Ascending aorta (tissue), 2 donors: ENCODE measurements at regions of chrX and their contacts with region 1.

Region 1: DNA sequence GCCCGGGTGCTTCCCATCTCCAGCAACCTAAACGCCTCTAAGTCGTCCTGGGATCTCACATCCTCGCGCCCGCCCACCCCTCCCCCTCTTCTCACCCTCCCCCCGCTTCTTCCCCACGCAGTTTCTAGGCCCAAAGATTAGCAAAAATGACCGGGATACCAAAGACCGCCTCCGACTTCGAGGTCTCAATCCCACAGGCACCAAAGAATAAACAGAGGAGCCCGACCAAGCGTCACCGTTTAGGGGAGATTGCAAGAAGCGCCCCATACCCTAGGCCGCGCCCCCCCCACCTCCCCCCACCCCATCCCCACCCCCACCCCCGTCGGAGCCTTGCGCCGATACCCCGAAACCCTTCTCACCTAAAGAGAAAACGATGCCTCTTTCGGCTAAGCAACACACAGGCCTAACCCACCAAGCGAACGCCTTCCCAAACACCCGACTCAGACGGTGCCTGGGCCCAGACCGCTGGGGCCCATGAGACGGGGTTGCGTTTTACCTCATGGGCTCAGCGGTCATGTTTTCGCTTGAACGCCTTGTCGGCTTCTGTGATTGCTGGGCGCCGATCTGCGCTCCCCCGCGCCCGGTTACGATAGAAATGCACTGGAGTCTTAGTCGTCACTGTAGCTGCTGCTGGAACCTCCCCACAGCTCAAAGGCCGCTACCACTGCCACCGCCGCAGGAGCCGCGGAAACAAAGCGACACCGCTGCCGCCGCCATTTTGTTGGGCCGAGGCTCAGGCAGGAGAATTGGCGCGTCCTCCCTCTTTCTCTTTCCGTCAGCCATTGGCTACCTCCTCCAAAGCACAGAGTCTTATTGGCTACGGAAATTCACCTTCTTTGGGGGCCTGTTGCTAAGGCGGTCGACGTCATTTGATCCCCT is at the start of gene ATRX:
- DNase-seq: peak; percentile 15 to 84
- H3K4me3 ChIP-seq: peak within 1 kb of the TSS; percentile 60 to 82
- H3K27ac ChIP-seq: peak within 1 kb of the TSS; percentile 90 to 93
- H3K4me1 ChIP-seq: no peaks in the 10 kb centered on the region
- H3K27me3 ChIP-seq: no peaks in the 10 kb centered on the region
- CTCF ChIP-seq: no peak
- total RNA-seq, gene ATRX: 117 TPM

Region 2: GRCh38 chrX:77675986-77676385 is 109.7 kb before region 1 on chrX:
- intact Hi-C with region 1: loop called (anchors 10 kb)
- DNase-seq: no peak
- H3K4me3 ChIP-seq: no peak overlapping the region
- H3K27ac ChIP-seq: no peak overlapping the region
- H3K4me1 ChIP-seq: no peaks in the 10 kb centered on the region
- H3K27me3 ChIP-seq: no peaks in the 10 kb centered on the region
- CTCF ChIP-seq: no peak